ENCODE measurements at regions of chr3 and their contacts with region 1.

Region 1: DNA sequence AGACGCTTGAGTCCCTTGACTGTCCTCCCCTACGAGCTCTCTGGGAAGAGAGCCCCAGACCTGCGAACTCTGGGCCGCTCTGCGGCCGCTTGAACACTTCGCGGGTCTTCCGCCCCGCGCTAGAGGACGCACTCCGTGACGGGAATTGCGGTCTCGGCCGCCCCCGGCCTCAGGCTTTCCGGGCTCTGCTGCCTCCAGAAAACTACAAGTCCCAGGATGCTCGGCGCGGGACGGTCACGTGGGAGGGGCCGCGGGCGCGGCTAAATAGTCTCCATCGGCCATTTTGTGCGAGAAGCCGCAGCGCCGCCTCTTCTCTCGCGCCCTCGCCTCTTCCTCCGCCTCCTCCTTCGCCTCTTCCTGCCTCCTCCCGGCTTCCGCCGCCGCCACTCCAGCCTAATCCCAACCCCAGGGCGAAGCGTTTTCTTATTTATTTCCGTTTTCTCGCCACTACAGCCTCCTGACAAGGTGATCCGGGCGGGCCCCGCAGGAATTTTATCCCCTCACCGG is at the start of gene EIF1B:
- DNase-seq: peak; percentile 85 to 98
- H3K4me3 ChIP-seq: peak within 1 kb of the TSS; percentile 93
- H3K27ac ChIP-seq: peak within 1 kb of the TSS; percentile 67
- H3K4me1 ChIP-seq: peaks cover 15% of the 10 kb centered on the region; the same call in 1 of the 2 replicates
- H3K27me3 ChIP-seq: no peaks in the 10 kb centered on the region
- CTCF ChIP-seq: peak; percentile 79
- total RNA-seq, gene EIF1B: 30.9 and 39.9 TPM in 2 replicates

Region 2: DNA sequence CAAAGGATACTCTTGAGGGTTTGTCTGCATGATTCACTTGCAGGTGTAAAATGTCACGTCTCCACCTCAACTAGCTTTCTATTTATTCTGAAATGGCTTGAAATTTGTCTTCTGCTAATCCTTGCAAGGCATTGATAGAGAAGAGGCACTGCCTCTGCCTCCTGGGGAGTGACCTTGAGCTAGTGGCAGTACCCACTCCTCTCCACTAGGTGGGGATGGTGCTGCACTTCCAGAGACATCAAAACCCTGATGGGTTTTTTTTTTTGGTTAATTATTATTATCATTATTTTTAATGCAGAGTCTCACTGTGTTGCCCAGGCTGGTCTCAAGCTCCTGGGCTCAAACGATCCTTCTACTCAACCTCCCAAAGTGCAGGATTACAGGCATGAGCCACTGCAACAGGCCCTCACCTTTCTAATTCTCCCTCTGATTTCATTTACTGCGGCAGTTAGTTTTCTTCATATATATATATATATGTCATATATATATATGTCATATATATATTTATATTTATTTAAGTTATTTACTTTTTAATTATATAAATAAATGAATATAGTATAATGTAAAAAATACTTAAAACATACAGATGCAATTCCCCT is 117.5 kb before region 1 on chr3:
- CTCF ChIA-PET with region 1: interaction called, 6 read pairs
- POLR2A ChIA-PET with region 1: interaction called, 3 read pairs
- intact Hi-C with region 1: loop called (anchors 1 kb)
- DNase-seq: peak; percentile 39 to 56
- H3K4me3 ChIP-seq: no peak overlapping the region
- H3K27ac ChIP-seq: no peak overlapping the region
- H3K4me1 ChIP-seq: no peaks in the 10 kb centered on the region
- H3K27me3 ChIP-seq: no peaks in the 10 kb centered on the region
- CTCF ChIP-seq: peak; percentile 87

Region 3: DNA sequence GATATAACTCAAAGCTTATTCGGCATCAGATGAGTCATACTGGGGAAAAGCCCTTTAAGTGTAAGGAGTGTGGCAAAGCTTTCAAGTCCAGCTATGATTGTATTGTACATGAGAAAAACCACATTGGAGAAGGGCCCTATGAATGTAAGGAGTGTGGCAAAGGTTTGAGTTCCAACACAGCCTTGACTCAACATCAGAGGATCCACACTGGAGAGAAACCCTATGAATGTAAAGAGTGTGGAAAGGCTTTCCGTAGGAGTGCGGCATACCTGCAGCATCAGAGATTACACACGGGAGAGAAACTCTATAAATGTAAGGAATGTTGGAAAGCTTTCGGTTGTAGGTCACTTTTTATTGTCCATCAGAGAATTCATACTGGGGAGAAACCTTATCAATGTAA is 222.8 kb after region 1 on chr3:
- CTCF ChIA-PET with region 1: no interaction called
- POLR2A ChIA-PET with region 1: no interaction called
- intact Hi-C with region 1: no loop called
- DNase-seq: no peak
- H3K4me3 ChIP-seq: no peak overlapping the region
- H3K27ac ChIP-seq: no peak overlapping the region
- H3K4me1 ChIP-seq: no peaks in the 10 kb centered on the region
- H3K27me3 ChIP-seq: no peaks in the 10 kb centered on the region
- CTCF ChIP-seq: no peak

Measured in PC-9 (cell line).